ENCODE measurements at regions of chr1 and their contacts with region 1.

Region 1: DNA sequence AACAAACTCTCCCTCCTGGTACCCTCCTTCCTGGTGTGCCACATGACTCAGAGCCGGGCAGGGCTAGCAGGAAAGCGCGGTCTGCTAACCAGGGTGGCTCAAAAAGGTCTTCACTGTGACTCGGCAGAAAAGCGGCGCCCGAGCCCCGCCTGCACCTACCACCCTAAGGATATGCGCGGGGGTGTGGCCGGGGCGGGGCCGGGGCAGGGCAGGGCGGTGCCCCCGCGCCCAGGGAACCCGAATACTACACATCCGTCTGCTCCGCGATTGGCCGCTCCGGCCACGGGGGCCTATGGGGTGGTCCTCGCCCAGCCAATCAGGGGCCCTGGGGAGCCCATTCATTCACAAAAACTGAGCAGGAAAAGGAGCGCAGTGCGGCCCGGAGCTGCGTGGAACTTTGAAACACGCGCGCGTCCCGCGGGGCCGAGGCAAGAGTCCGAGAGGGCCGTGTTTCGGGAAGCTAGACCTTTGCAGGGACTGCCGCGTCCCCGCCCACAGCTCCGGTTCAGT is 1.7 kb downstream of the LRP8 start:
- DNase-seq: peak; percentile 94
- H3K4me3 Mint-ChIP-seq: peak overlapping the region; percentile 96
- H3K27ac Mint-ChIP-seq: peak overlapping the region; percentile 96
- H3K4me1 Mint-ChIP-seq: peaks cover 44% of the 10 kb centered on the region
- H3K27me3 Mint-ChIP-seq: no peaks in the 10 kb centered on the region

Region 2: DNA sequence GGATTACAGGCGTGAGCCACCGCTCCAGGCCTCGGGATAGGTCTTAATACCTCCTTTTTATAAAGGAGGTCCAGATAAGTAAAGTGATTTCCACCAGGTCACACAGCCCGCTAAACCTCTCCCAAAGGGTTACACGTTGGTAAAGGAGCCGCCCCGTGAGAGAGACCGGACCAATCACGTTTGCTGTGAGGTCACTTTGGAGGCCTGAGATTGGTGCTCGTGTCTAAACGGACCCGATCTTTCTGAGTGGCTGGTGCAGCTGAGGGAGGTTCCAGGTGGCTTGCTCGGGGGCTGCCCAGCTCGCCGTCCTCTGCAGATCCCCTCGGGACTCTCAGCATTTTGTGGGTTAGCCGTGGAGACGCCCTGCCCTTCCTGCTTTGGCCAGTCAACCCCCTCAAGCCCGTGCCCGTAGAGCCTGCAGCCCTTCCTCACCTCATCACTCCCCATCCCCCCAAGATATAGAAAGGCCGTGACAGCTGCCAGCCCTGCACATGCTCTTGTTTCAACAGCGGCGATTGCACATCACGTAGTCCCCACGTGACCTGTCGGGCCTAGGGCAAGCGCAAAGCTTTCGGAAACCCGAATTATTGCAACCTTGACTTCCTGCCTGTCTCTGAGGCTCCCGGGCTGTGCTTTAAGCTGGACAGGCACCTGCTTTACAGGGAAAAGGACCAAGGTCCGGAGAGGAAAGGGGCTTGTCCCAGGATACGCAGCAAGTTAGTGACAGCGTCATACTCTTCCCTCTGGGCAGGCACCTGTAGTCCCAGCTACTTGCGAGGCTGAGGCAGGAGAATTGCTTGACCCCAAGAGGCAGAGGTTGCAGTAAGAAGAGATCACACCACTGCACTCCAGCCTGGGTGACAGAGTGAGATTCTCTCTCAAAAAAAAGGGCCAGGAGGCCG is 623.0 kb before region 1 on chr1:
- intact Hi-C with region 1: loop called (anchors 5 kb)
- DNase-seq: peak; percentile 80
- H3K4me3 Mint-ChIP-seq: peak overlapping the region; percentile 82
- H3K27ac Mint-ChIP-seq: peak overlapping the region; percentile 88
- H3K4me1 Mint-ChIP-seq: peaks cover 32% of the 10 kb centered on the region
- H3K27me3 Mint-ChIP-seq: peaks cover 4% of the 10 kb centered on the region

Region 3: GRCh38 chr1:53196485-53197270 is 129.5 kb before region 1 on chr1 and contains the start of gene CPT2:
- intact Hi-C with region 1: loop called (anchors 1 kb)
- DNase-seq: peak; percentile 92
- H3K4me3 Mint-ChIP-seq: peak within 1 kb of the TSS; percentile 95
- H3K27ac Mint-ChIP-seq: peak within 1 kb of the TSS; percentile 92
- H3K4me1 Mint-ChIP-seq: peaks cover 28% of the 10 kb centered on the region
- H3K27me3 Mint-ChIP-seq: no peaks in the 10 kb centered on the region
- total RNA-seq, gene CPT2: 18.5 and 19.4 TPM in 2 replicates

Region 4: DNA sequence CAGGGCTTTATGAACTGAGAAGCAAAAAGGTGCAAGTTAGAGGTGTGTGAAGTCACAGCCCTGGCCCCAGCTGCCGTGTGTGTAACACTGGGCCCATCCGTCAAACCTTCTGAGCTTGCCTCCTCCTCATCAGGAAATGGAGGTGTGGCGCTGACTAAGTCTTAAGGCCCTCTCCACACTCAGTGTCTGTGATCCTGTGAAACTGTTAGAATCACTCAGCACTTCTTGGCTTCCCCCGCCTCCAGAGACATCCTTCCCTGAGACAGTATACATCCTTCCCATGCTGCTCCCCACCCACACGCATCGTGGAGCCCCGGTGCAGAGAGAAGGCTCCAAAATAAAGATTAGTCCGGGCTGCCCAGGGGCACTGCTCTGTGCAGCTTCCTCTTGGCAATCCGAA is 31.6 kb before region 1 on chr1:
- intact Hi-C with region 1: loop called (anchors 5 kb)
- DNase-seq: peak; percentile 48
- H3K4me3 Mint-ChIP-seq: peak overlapping the region; percentile 21
- H3K27ac Mint-ChIP-seq: peak overlapping the region; percentile 70
- H3K4me1 Mint-ChIP-seq: peaks cover 40% of the 10 kb centered on the region
- H3K27me3 Mint-ChIP-seq: no peaks in the 10 kb centered on the region

Region 5: GRCh38 chr1:53473463-53473862 is 147.3 kb after region 1 on chr1:
- intact Hi-C with region 1: loop called (anchors 2 kb)
- DNase-seq: no peak
- H3K4me3 Mint-ChIP-seq: no peak overlapping the region
- H3K27ac Mint-ChIP-seq: no peak overlapping the region
- H3K4me1 Mint-ChIP-seq: no peaks in the 10 kb centered on the region
- H3K27me3 Mint-ChIP-seq: peaks cover 3% of the 10 kb centered on the region

Region 6: DNA sequence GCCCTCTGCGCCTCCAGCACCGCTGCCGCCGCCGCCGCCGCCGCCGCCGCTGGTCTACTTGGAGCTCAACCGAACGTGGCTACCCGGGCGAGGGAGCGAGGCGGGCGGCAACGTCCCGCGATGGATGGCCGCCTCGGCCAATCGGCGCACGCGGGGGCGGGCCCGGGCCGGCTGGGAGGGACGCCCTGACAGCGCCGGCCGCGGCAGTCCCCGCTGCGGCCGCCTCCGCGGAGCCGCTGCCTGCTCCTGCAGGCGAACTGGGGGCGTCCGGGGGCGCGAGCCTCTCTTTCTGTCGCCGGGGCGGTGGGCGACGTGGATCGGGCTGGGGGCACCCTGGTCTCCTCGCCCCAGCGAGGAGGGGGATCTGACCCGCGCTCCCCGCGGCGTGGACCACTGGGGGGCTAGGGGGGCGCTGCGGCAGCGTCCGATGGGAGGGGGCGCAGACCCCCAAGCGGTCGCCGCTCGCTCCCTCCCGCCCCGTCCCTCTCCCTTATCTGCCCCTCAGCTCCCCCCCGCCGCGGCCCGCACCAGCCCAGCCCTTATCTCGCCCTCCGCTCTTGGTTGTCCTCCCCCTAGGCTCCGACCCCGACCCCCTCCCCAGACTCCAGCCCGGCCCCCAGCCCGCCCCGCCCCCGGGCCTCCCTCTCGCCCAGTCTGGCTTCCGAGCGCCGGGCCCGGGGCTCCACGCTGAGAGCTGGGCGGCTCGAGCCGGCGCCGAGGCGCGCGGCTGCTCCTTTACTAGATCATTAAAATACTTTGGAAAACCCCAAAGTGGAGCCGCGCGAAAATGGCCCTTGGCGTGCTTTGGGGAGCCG is 1080.4 kb after region 1 on chr1 and contains the start of gene SSBP3:
- intact Hi-C with region 1: loop called (anchors 2 kb)
- DNase-seq: peak; percentile 91
- H3K4me3 Mint-ChIP-seq: peak within 1 kb of the TSS; percentile 88
- H3K27ac Mint-ChIP-seq: peak within 1 kb of the TSS; percentile 83
- H3K4me1 Mint-ChIP-seq: peaks cover 72% of the 10 kb centered on the region
- H3K27me3 Mint-ChIP-seq: no peaks in the 10 kb centered on the region
- total RNA-seq, gene SSBP3: 98.0 and 110 TPM in 2 replicates

Measured in activated T-helper 1 cell treated with anti-CD3 and anti-CD28 coated beads, Interleukin-12 subunit alpha, Interleukin-12 subunit beta, Interleukin-2, Interleukin-4 antibody, amounts not matched to agents 30 ng/mL and 10 ng/mL and 1 ng/mL, durations not matched to agents 14 hours and 24 hours and 36 hours (primary cell).